Endothelial cell of umbilical vein (primary cell): ENCODE measurements at regions of chr2 and their contacts with region 1.

Region 1: DNA sequence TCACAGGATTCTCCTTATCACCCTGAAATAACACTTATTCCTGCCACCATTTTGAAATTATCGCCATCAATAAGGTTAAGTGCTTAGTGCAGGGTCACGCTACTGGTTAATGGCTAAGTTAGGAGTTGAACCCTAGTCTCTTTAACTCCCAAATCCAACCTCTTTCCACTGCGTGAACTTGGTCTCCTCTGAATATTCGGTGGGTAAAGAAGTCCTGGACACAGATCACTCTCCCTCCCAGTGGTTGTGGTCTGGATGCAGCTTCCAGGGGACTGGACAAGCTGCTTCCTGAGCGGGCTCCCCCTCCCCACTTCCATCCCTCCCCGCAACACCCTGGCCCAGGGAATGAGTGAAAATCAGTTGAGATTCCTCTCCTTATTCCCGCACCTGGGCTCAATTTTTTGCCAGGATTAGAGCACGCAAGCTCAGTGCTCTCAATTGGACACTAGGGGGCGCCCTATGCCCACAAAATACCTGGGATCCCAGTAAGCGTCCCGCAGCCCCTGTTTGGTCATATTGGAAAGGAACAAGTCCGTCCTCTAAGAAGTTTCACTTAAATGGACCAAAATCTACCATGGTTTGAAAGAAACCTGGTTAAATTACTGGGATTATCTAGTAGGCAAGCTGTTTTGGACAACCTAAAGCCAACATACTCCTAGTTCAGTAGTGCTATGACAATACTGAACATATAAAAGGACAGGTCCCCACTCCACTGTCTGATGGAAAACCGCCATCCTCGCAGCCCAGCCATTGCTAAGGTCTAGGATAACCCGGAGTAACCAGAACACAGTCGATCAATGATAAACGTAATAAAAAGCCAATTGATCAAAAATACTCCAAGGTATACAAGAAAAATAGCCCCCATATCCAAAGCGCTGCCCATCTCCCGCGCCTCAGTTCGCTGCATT is 40.4 kb downstream of the DHRS9 start:
- DNase-seq: peak; percentile 81
- H3K4me3 ChIP-seq: no peak overlapping the region
- H3K27ac ChIP-seq: no peak overlapping the region
- H3K4me1 ChIP-seq: peaks cover 11% of the 10 kb centered on the region
- H3K27me3 ChIP-seq: no peaks in the 10 kb centered on the region
- CTCF ChIP-seq: peak; percentile 82 to 91
- POLR2A ChIP-seq: no peak

Region 2: GRCh38 chr2:168961450-168962229 is 148.1 kb before region 1 on chr2:
- CTCF ChIA-PET with region 1: interaction called, 20 read pairs
- POLR2A ChIA-PET with region 1: no interaction called
- dilution Hi-C with region 1: no loop called
- intact Hi-C with region 1: loop called (anchors 1 kb)
- DNase-seq: peak; percentile 89
- H3K4me3 ChIP-seq: no peak overlapping the region
- H3K27ac ChIP-seq: no peak overlapping the region
- H3K4me1 ChIP-seq: peaks cover 5% of the 10 kb centered on the region
- H3K27me3 ChIP-seq: no peaks in the 10 kb centered on the region
- CTCF ChIP-seq: peak; percentile 63 to 68
- POLR2A ChIP-seq: no peak

Region 3: GRCh38 chr2:168992591-168993349 is 117.0 kb before region 1 on chr2:
- CTCF ChIA-PET with region 1: interaction called, 11 read pairs
- POLR2A ChIA-PET with region 1: no interaction called
- dilution Hi-C with region 1: no loop called
- intact Hi-C with region 1: no loop called
- DNase-seq: peak; percentile 73
- H3K4me3 ChIP-seq: no peak overlapping the region
- H3K27ac ChIP-seq: peak overlapping the region; percentile 90
- H3K4me1 ChIP-seq: peaks cover 63% of the 10 kb centered on the region
- H3K27me3 ChIP-seq: no peaks in the 10 kb centered on the region
- CTCF ChIP-seq: no peak
- POLR2A ChIP-seq: no peak

Region 4: DNA sequence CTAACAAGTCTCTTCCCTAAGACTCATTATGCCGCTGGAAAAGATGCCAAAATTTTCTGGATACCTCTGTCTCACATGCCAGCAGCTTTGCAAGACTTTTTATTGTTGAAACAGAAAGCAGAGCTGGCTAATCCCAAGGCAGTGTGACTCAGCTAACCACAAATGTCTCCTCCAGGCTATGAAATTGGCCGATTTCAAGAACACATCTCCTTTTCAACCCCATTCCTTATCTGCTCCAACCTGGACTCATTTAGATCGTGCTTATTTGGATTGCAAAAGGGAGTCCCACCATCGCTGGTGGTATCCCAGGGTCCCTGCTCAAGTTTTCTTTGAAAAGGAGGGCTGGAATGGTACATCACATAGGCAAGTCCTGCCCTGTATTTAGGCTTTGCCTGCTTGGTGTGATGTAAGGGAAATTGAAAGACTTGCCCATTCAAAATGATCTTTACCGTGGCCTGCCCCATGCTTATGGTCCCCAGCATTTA is 14.1 kb before region 1 on chr2:
- CTCF ChIA-PET with region 1: interaction called, 20 read pairs
- POLR2A ChIA-PET with region 1: no interaction called
- dilution Hi-C with region 1: no loop called
- intact Hi-C with region 1: no loop called
- DNase-seq: no peak
- H3K4me3 ChIP-seq: no peak overlapping the region
- H3K27ac ChIP-seq: no peak overlapping the region
- H3K4me1 ChIP-seq: no peaks in the 10 kb centered on the region
- H3K27me3 ChIP-seq: no peaks in the 10 kb centered on the region
- CTCF ChIP-seq: no peak
- POLR2A ChIP-seq: no peak

Region 5: DNA sequence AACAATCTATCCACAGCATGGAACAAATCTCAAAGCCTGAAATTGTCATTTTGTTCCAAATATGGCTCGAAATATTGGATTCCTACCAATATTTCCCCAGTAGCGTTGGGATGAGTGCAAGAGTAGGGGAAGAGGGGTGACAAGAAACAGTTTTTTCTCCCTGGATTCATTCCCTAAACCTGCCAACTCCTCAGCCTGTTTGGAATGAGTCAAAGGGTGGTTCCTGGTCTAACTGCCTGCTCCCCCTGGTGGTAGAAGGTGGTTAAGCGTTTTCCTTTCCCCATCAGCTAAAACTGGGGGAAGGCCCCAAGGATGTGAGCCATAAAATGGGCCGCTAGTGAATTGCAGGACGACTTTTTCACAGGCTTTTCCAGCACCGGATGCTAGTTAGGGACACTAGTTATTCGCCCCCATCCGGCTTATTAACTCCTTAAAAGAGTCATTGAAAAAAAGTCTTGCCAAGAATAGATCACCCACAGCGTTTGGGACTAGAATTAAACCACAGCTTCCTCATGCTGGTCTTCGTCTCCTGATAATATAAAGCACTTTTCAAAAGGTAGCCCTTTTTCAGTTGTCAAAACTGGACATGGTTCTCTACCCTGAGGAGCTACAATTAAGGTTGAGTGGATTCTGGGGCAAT is 32.1 kb after region 1 on chr2:
- CTCF ChIA-PET with region 1: interaction called, 217 read pairs
- POLR2A ChIA-PET with region 1: interaction called, 3 read pairs
- dilution Hi-C with region 1: no loop called
- intact Hi-C with region 1: loop called (anchors 1 kb)
- DNase-seq: peak; percentile 58
- H3K4me3 ChIP-seq: no peak overlapping the region
- H3K27ac ChIP-seq: no peak overlapping the region
- H3K4me1 ChIP-seq: peaks cover 3% of the 10 kb centered on the region
- H3K27me3 ChIP-seq: no peaks in the 10 kb centered on the region
- CTCF ChIP-seq: peak; percentile 85 to 90
- POLR2A ChIP-seq: no peak

Region 6: GRCh38 chr2:169203928-169204327 is 94.2 kb after region 1 on chr2:
- CTCF ChIA-PET with region 1: no interaction called
- POLR2A ChIA-PET with region 1: no interaction called
- dilution Hi-C with region 1: no loop called
- intact Hi-C with region 1: no loop called
- DNase-seq: no peak
- H3K4me3 ChIP-seq: no peak overlapping the region
- H3K27ac ChIP-seq: no peak overlapping the region
- H3K4me1 ChIP-seq: no peaks in the 10 kb centered on the region
- H3K27me3 ChIP-seq: no peaks in the 10 kb centered on the region
- CTCF ChIP-seq: no peak
- POLR2A ChIP-seq: no peak

Region 7: GRCh38 chr2:169275696-169276444 is 166.1 kb after region 1 on chr2:
- CTCF ChIA-PET with region 1: interaction called, 71 read pairs
- POLR2A ChIA-PET with region 1: no interaction called
- dilution Hi-C with region 1: no loop called
- intact Hi-C with region 1: loop called (anchors 1 kb)
- DNase-seq: peak; percentile 10
- H3K4me3 ChIP-seq: no peak overlapping the region
- H3K27ac ChIP-seq: no peak overlapping the region
- H3K4me1 ChIP-seq: no peaks in the 10 kb centered on the region
- H3K27me3 ChIP-seq: peaks cover 0 to 2% of the 10 kb centered on the region in 2 experiments
- CTCF ChIP-seq: peak; percentile 10 to 11
- POLR2A ChIP-seq: no peak

Region 8: DNA sequence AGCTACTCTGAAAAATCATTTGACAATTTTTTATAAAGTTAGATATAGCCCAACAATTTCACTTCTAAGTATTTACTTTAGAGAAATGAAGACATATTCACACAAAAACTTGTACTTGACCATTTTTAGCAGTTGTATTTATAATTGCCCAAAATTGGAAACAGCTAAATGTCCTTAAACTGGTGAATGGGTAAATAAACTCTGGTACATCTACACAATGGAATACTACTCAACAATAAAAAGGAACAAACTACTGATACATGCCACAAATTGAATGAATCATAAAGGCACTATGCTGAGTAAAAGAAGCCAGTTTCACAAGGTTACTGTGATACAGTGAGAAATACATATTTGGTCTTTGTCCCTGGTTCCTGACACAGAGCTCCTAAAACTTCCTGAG is 336.7 kb after region 1 on chr2:
- CTCF ChIA-PET with region 1: interaction called, 5 read pairs
- POLR2A ChIA-PET with region 1: no interaction called
- dilution Hi-C with region 1: no loop called
- intact Hi-C with region 1: loop called (anchors 10 kb)
- DNase-seq: no peak
- H3K4me3 ChIP-seq: no peak overlapping the region
- H3K27ac ChIP-seq: no peak overlapping the region
- H3K4me1 ChIP-seq: no peaks in the 10 kb centered on the region
- H3K27me3 ChIP-seq: peaks cover 4 to 8% of the 10 kb centered on the region in 2 experiments
- CTCF ChIP-seq: no peak
- POLR2A ChIP-seq: no peak